IMR-90 (cell line): ENCODE measurements at regions of chr9 and their contacts with region 1.

Region 1: DNA sequence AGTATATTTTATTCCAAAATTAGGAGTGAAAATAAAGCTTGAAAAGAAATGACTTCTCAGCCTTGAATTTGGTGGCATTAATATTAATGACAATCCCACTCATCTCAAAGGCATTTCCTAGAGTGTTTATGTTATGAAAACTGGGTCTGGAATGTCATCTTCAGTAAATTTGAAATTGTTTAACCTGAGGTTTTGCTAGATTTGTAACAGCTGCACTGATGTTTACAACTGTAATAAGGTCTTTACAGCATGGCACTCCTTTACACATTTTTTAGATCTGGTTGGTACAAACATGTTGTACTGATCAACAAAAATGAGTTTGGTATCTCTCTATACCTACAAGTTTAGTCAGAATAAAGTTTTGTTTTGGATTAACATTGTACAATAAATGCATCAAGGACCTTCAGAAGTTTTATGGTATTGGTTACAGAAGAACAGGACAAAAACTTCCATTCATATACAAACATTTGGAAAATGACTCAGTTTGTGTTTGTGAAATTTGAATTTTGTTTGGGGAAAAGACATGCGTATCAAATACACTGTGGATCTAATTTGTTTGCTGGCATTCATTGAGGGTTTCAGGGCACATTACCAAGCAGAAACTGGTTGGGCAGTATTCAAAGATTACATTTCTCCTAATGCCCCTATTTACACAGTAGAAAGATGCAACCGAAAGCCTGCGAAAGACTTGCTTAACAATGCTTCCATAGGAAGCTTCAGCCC is 11.6 kb downstream of the FANCC start:
- DNase-seq: peak; percentile 55
- ATAC-seq: peak; percentile 73
- H3K4me3 ChIP-seq: no peak overlapping the region
- H3K27ac ChIP-seq: peak overlapping the region; percentile 90; the same call in 1 of the 2 replicates
- H3K4me1 ChIP-seq: peaks cover 9% of the 10 kb centered on the region
- H3K27me3 ChIP-seq: no peaks in the 10 kb centered on the region
- CTCF ChIP-seq: no peak
- POLR2A ChIP-seq: no peak
- RAD21 ChIP-seq: no peak

Region 2: DNA sequence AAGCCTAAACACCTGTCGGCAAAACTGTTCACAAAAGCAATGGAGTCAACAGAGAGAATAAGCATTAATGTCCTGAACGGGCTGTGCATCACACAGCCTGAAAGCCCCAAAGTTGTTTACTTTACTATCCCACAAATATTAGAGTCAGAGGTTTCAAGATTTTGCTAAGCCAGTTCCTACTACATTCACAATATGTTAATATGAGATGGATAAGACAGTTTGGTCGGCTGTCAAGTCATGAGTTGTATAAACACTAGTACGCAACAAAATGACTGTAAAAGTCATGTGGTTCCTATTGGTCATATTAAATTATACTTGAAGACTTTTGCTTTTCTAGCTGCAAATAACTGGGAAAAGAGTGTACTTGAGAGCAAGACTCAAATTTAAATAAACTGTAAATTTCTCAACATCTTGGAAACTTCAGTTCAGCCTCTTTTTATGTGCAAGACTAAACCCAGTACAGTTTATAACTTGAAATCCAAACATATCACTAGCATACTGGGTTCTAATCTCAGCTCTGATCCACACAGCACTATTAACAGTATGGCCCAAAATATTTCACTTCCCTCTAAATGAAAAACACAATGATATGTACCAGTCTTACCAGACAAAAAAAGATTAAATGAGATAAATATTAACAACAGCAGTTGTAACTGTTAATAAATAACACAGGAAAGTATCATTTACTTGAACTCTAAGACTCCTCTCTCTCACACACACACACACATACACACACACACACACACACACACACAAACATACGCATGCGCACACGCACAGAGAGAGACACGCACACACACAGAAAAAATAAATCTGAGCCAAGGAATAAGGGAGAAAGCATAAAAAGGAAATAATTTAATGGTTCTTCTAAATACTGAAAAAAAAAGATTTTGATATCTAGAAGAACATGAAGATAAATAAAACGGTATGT is 21.5 kb before region 1 on chr9:
- CTCF ChIA-PET with region 1: no interaction called
- POLR2A ChIA-PET with region 1: no interaction called
- dilution Hi-C with region 1: no loop called
- in situ Hi-C with region 1: no loop called
- intact Hi-C with region 1: loop called (anchors 1 kb)
- DNase-seq: peak; percentile 94
- ATAC-seq: peak; percentile 92
- H3K4me3 ChIP-seq: no peak overlapping the region
- H3K27ac ChIP-seq: peak overlapping the region; percentile 100
- H3K4me1 ChIP-seq: peaks cover 4% of the 10 kb centered on the region
- H3K27me3 ChIP-seq: no peaks in the 10 kb centered on the region
- CTCF ChIP-seq: no peak
- POLR2A ChIP-seq: no peak
- RAD21 ChIP-seq: no peak

Region 3: GRCh38 chr9:95450171-95451064 is 144.5 kb after region 1 on chr9:
- CTCF ChIA-PET with region 1: no interaction called
- POLR2A ChIA-PET with region 1: no interaction called
- dilution Hi-C with region 1: no loop called
- in situ Hi-C with region 1: no loop called
- intact Hi-C with region 1: loop called (anchors 5 kb)
- DNase-seq: no peak
- ATAC-seq: peak; percentile 42
- H3K4me3 ChIP-seq: no peak overlapping the region
- H3K27ac ChIP-seq: no peak overlapping the region
- H3K4me1 ChIP-seq: peaks cover 10% of the 10 kb centered on the region
- H3K27me3 ChIP-seq: no peaks in the 10 kb centered on the region
- CTCF ChIP-seq: no peak
- POLR2A ChIP-seq: no peak
- RAD21 ChIP-seq: no peak

Region 4: GRCh38 chr9:95588724-95589652 is 283.1 kb after region 1 on chr9:
- CTCF ChIA-PET with region 1: no interaction called
- POLR2A ChIA-PET with region 1: no interaction called
- dilution Hi-C with region 1: no loop called
- in situ Hi-C with region 1: no loop called
- intact Hi-C with region 1: no loop called
- DNase-seq: no peak
- ATAC-seq: peak; percentile 63
- H3K4me3 ChIP-seq: no peak overlapping the region
- H3K27ac ChIP-seq: no peak overlapping the region
- H3K4me1 ChIP-seq: no peaks in the 10 kb centered on the region; the same call in 1 of the 2 replicates
- H3K27me3 ChIP-seq: peaks cover 15% of the 10 kb centered on the region
- CTCF ChIP-seq: no peak
- POLR2A ChIP-seq: no peak
- RAD21 ChIP-seq: no peak

Region 5: GRCh38 chr9:96136992-96137670 is 831.2 kb after region 1 on chr9:
- CTCF ChIA-PET with region 1: no interaction called
- POLR2A ChIA-PET with region 1: no interaction called
- dilution Hi-C with region 1: no loop called
- in situ Hi-C with region 1: no loop called
- intact Hi-C with region 1: no loop called
- DNase-seq: peak; percentile 78
- ATAC-seq: peak; percentile 83
- H3K4me3 ChIP-seq: peak overlapping the region; percentile 35
- H3K27ac ChIP-seq: peak overlapping the region; percentile 89; the same call in 1 of the 2 replicates
- H3K4me1 ChIP-seq: peaks cover 29% of the 10 kb centered on the region
- H3K27me3 ChIP-seq: peaks cover 28% of the 10 kb centered on the region
- CTCF ChIP-seq: no peak
- POLR2A ChIP-seq: no peak
- RAD21 ChIP-seq: no peak